ENCODE measurements at regions of chr14 and their contacts with region 1.

Region 1: GRCh38 chr14:90301668-90302090 is 30.1 kb downstream of the NRDE2 start:
- DNase-seq: peak; percentile 80
- ATAC-seq: peak; percentile 91
- H3K4me3 ChIP-seq: no peak overlapping the region
- H3K27ac ChIP-seq: no peak overlapping the region
- H3K4me1 ChIP-seq: peaks cover under 1% of the 10 kb centered on the region; the same call in 1 of the 2 replicates
- H3K27me3 ChIP-seq: no peaks in the 10 kb centered on the region
- CTCF ChIP-seq: peak; percentile 79
- POLR2A ChIP-seq: no peak
- RAD21 ChIP-seq: peak; percentile 86

Region 2: GRCh38 chr14:90399541-90400444 is 98.1 kb after region 1 on chr14:
- CTCF ChIA-PET with region 1: interaction called, 4 read pairs
- POLR2A ChIA-PET with region 1: interaction called, 6 read pairs
- dilution Hi-C with region 1: no loop called
- in situ Hi-C with region 1: no loop called
- intact Hi-C with region 1: loop called (anchors 1 kb)
- DNase-seq: peak; percentile 88
- ATAC-seq: peak; percentile 42
- H3K4me3 ChIP-seq: no peak overlapping the region
- H3K27ac ChIP-seq: no peak overlapping the region
- H3K4me1 ChIP-seq: peaks cover 4% of the 10 kb centered on the region
- H3K27me3 ChIP-seq: no peaks in the 10 kb centered on the region
- CTCF ChIP-seq: peak; percentile 100
- POLR2A ChIP-seq: no peak
- RAD21 ChIP-seq: peak; percentile 93

Region 3: GRCh38 chr14:90697577-90698206 is 396.0 kb after region 1 on chr14:
- CTCF ChIA-PET with region 1: interaction called, 10 read pairs
- POLR2A ChIA-PET with region 1: no interaction called
- dilution Hi-C with region 1: no loop called
- in situ Hi-C with region 1: loop called (anchors 5 kb)
- intact Hi-C with region 1: loop called (anchors 1 kb)
- DNase-seq: peak; percentile 72
- ATAC-seq: peak; percentile 90
- H3K4me3 ChIP-seq: no peak overlapping the region
- H3K27ac ChIP-seq: no peak overlapping the region
- H3K4me1 ChIP-seq: peaks cover 2% of the 10 kb centered on the region; the same call in 1 of the 2 replicates
- H3K27me3 ChIP-seq: no peaks in the 10 kb centered on the region
- CTCF ChIP-seq: peak; percentile 94
- POLR2A ChIP-seq: 0 out of 2 replicates have a peak, but pooled peaks have one; percentile 33
- RAD21 ChIP-seq: peak; percentile 94

Region 4: DNA sequence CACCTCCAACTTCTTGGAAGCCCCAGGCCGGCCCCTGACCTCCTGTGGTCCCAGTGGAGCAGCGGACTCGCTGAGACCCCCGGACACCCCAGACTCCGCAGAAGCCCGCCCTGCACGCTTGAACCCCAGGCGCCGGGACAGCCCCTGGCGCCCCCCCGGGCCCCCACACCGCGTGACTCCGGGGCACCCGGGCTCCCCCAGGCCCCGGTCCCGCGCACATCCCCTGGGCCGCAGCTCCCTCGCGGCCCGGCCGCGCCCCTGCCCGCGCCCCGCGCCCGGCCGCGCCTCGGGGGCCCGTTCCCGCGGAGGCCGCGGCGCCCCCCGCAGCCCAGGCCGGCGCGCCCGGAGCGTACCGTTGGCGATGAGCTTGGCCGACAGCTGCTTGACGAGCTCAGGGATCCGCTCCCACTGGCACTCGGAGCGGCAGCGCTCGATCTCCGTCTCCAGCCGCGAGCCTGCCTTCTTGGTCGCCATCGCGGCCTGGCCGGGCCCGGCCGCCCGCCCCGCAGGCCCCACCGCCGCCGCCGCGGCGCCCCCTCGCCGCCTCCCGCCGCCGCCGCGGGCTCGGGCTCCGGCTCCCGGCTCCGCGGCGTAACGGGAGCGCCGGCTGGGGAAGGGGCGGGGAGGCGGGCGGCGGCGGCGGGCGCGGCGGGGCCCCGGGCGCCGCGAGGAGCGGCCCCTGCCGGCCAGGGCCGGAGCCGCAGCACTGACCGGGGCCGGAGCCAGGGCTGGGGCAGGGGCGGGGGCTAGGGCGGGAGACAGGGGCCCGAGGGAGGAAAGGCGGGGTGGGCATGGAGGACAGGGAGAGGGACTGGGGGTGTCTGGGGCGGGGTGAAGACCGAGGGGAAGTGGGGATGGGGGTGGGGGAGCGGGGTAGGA is 514.4 kb after region 1 on chr14 and contains the start of gene TTC7B:
- CTCF ChIA-PET with region 1: no interaction called
- POLR2A ChIA-PET with region 1: no interaction called
- dilution Hi-C with region 1: no loop called
- in situ Hi-C with region 1: no loop called
- intact Hi-C with region 1: loop called (anchors 5 kb)
- DNase-seq: peak; percentile 24
- ATAC-seq: peak; percentile 98
- H3K4me3 ChIP-seq: peak within 1 kb of the TSS; percentile 100
- H3K27ac ChIP-seq: peak within 1 kb of the TSS; percentile 83
- H3K4me1 ChIP-seq: peaks cover 5% of the 10 kb centered on the region
- H3K27me3 ChIP-seq: peaks cover 16% of the 10 kb centered on the region; the same call in 1 of the 2 replicates
- CTCF ChIP-seq: peak; percentile 45
- POLR2A ChIP-seq: no peak
- RAD21 ChIP-seq: no peak; the same call in 1 of the 2 replicates
- total RNA-seq, gene TTC7B: 16.1 and 18.1 TPM in 2 replicates

Measured in IMR-90 (cell line).